Kidney (tissue), 22 donors: ENCODE measurements at regions of chr1 and their contacts with region 1.

Region 1: DNA sequence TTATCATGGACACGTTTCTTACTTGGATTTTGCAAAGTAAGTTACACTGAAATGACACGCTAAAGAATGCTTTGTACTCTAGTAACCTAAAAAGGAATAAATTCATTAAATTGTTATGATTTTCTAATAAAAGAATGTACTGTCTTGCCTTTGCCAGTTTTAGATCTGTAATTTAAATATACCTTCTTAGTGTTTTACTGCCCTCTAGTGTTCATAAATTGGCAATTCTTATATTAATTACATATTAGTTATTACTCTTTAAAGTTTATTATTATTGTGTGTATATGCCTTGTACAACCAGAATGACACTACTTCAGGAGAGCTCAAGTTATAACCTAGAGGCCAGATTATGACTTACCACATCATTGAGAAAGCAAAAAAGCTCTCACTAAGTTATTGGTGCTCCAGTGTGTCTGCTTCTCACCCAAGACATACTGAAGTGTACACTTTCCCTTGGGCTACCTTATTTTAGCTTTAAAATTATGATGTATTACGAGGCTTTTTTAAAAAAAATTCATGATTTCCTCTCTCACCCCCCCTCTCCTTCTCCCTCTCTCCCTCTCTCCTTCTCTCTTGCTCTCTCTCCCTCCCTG is 169.9 kb downstream of the HS2ST1 start:
- DNase-seq: peak in 2 of 5 donors; percentile 30 to 36
- H3K4me3 ChIP-seq: no peak overlapping the region
- H3K27ac ChIP-seq: no peak overlapping the region
- H3K4me1 ChIP-seq: no peaks in the 10 kb centered on the region
- H3K27me3 ChIP-seq: no peaks in the 10 kb centered on the region
- CTCF ChIP-seq: peak; percentile 38

Region 2: GRCh38 chr1:86833461-86834215 is 250.7 kb before region 1 on chr1:
- intact Hi-C with region 1: loop called (anchors 10 kb)
- DNase-seq: peak; percentile 67 to 95 (median 77)
- H3K4me3 ChIP-seq: peak overlapping the region in 1 of 3 donors; percentile 4
- H3K27ac ChIP-seq: no peak overlapping the region
- H3K4me1 ChIP-seq: no peaks in the 10 kb centered on the region
- H3K27me3 ChIP-seq: no peaks in the 10 kb centered on the region
- CTCF ChIP-seq: peak; percentile 75